Heart left ventricle (tissue), 16 donors: ENCODE measurements at regions of chr4 and their contacts with region 1.

Region 1: DNA sequence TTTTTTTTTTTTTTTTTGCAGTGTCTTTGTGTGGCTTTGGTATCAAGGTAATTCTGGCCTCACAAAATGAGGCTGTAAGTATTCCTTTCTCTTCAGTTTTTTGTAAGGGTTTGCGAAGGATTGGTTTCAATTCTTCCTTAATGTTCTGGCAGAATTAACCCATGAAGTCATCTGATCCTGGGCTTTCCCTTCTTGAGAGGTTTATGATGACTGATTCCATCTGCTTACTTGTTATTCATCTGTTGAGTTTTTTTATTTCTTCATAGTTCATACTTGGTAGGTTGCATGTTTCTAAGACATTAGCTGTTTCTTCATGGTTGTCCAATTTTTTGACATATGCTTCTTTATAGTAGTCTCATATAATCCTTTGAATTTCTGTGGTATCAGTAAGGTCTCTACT is 181.4 kb upstream of the PDE5A start:
- DNase-seq: no peak
- ATAC-seq: no peak
- H3K4me3 ChIP-seq: no peak overlapping the region
- H3K27ac ChIP-seq: no peak overlapping the region
- H3K4me1 ChIP-seq: no peaks in the 10 kb centered on the region
- H3K27me3 ChIP-seq: no peaks in the 10 kb centered on the region
- CTCF ChIP-seq: no peak
- POLR2A ChIP-seq: no peak

Region 2: GRCh38 chr4:119841361-119841760 is 31.4 kb after region 1 on chr4:
- intact Hi-C with region 1: loop called in 1 of 10 experiments (anchors 2 kb)
- DNase-seq: no peak
- ATAC-seq: no peak
- H3K4me3 ChIP-seq: no peak overlapping the region
- H3K27ac ChIP-seq: no peak overlapping the region
- H3K4me1 ChIP-seq: no peaks in the 10 kb centered on the region
- H3K27me3 ChIP-seq: no peaks in the 10 kb centered on the region
- CTCF ChIP-seq: no peak
- POLR2A ChIP-seq: no peak